ENCODE measurements at regions of chr17 and their contacts with region 1.

Region 1: GRCh38 chr17:64479650-64480049 is 17.2 kb downstream of the POLG2 start:
- DNase-seq: no peak
- ATAC-seq: no peak
- H3K4me3 ChIP-seq: no peak overlapping the region
- H3K4me3 Mint-ChIP-seq: no peak overlapping the region
- H3K27ac ChIP-seq: no peak overlapping the region
- H3K27ac Mint-ChIP-seq: peak overlapping the region; percentile 52
- H3K4me1 ChIP-seq: peaks cover 4% of the 10 kb centered on the region
- H3K4me1 Mint-ChIP-seq: peaks cover 7% of the 10 kb centered on the region
- H3K27me3 ChIP-seq: no peaks in the 10 kb centered on the region
- H3K27me3 Mint-ChIP-seq: no peaks in the 10 kb centered on the region
- CTCF ChIP-seq: no peak

Region 2: DNA sequence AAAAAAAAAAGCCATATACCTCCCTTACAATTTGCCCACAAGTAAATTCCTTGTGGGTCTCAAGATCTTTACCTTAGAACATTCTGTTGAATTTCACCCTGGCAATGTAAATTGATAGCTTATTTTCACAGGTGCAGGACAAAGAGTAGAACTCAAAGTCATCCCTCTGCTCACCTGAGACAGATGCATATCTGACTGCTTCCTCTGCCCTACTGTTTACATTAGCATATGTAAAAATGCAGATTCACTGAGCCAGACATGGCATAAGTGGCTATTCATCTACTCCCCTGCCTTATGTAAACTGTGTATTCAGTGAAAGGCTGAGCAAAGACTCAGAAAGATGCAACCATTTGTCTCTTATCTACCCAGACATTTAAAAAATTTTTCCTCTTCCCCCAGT is 53.1 kb before region 1 on chr17:
- CTCF ChIA-PET with region 1: interaction called, 19 read pairs
- POLR2A ChIA-PET with region 1: interaction called, 3 read pairs
- intact Hi-C with region 1: loop called in 1 of 2 experiments (anchors 5 kb)
- DNase-seq: no peak
- ATAC-seq: no peak
- H3K4me3 ChIP-seq: no peak overlapping the region
- H3K4me3 Mint-ChIP-seq: no peak overlapping the region
- H3K27ac ChIP-seq: no peak overlapping the region
- H3K27ac Mint-ChIP-seq: no peak overlapping the region
- H3K4me1 ChIP-seq: no peaks in the 10 kb centered on the region
- H3K4me1 Mint-ChIP-seq: no peaks in the 10 kb centered on the region
- H3K27me3 ChIP-seq: no peaks in the 10 kb centered on the region
- H3K27me3 Mint-ChIP-seq: peaks cover 2% of the 10 kb centered on the region
- CTCF ChIP-seq: no peak

Region 3: GRCh38 chr17:64515419-64515818 is 35.8 kb after region 1 on chr17:
- CTCF ChIA-PET with region 1: no interaction called
- POLR2A ChIA-PET with region 1: no interaction called
- intact Hi-C with region 1: loop called in 1 of 2 experiments (anchors 5 kb)
- DNase-seq: no peak
- ATAC-seq: no peak
- H3K4me3 ChIP-seq: no peak overlapping the region
- H3K4me3 Mint-ChIP-seq: no peak overlapping the region
- H3K27ac ChIP-seq: no peak overlapping the region
- H3K27ac Mint-ChIP-seq: no peak overlapping the region
- H3K4me1 ChIP-seq: no peaks in the 10 kb centered on the region
- H3K4me1 Mint-ChIP-seq: peaks cover 42% of the 10 kb centered on the region
- H3K27me3 ChIP-seq: no peaks in the 10 kb centered on the region
- H3K27me3 Mint-ChIP-seq: no peaks in the 10 kb centered on the region
- CTCF ChIP-seq: no peak

Measured in CD8-positive, alpha-beta T cell (primary cell).